ENCODE measurements at regions of chr4 and their contacts with region 1.

Region 1: DNA sequence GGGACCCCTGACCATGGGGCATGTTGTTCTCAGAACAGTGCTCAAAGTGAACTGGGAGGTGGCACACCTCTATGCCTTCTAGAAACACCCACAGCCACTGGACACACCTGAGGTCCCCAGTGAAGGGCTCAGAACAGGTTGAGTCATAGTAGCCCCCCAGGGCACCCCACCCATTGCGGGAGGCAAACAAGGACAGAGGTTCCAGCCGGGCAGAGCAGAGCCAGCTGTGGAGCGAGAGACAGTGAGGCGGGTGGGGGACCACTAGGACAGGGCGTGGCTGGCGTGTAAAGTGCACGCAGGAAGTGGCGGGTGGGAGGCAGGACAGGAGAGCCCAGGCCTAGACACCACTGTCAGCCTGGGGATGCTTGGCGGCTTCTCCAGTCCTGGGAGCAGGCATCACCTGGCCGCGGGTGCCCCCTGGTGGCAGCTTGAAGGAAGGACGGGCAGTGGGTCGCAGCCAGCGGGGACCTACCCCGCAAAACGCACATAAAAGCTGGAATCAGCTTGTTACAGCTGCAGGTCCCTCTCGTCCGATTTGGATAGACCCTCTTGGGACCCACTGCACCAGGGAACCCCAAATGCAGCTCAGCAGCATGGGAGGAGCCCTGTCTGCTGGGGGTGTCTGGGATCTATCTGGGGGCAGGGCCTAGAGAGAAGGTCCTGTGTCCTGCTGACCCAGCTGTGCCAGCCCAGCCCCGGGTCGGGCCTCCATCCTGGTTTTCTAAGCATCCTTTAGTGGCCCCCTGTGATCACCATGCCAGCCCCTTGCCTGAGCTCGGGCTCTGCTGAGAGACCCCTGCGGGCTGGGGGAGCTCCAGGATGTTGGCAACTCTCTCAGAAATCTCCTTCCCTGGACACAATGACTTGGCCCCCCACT is 57.6 kb downstream of the WFS1 start:
- DNase-seq: peak; percentile 78 to 92 (median 91)
- ATAC-seq: peak; percentile 70 to 73
- H3K4me3 ChIP-seq: no peak overlapping the region
- H3K27ac ChIP-seq: no peak overlapping the region
- H3K4me1 ChIP-seq: no peaks in the 10 kb centered on the region
- H3K27me3 ChIP-seq: no peaks in the 10 kb centered on the region

Region 2: DNA sequence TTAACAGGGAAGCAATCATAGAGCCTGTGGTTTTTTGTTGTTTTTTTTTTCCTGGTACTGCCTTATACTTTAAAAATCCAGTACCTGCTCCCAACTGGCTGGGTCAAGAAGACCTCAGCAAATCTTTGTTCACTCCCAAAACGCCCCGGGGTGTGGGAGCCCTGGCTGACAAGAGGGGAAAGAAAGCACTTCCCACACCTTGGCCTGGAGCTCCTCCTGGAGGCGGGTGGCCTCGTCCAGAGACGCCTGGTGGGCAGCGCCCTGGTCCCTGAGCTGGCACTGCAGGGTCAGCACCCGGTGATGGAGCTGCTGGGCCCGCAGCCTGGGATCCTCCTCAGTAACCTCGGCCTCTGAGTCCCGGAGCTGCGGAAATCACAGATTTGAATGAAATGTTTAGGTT is 347.3 kb before region 1 on chr4:
- intact Hi-C with region 1: no loop called
- DNase-seq: no peak
- ATAC-seq: peak in 1 of 2 donors; percentile 29
- H3K4me3 ChIP-seq: no peak overlapping the region
- H3K27ac ChIP-seq: no peak overlapping the region
- H3K4me1 ChIP-seq: no peaks in the 10 kb centered on the region
- H3K27me3 ChIP-seq: no peaks in the 10 kb centered on the region

Region 3: DNA sequence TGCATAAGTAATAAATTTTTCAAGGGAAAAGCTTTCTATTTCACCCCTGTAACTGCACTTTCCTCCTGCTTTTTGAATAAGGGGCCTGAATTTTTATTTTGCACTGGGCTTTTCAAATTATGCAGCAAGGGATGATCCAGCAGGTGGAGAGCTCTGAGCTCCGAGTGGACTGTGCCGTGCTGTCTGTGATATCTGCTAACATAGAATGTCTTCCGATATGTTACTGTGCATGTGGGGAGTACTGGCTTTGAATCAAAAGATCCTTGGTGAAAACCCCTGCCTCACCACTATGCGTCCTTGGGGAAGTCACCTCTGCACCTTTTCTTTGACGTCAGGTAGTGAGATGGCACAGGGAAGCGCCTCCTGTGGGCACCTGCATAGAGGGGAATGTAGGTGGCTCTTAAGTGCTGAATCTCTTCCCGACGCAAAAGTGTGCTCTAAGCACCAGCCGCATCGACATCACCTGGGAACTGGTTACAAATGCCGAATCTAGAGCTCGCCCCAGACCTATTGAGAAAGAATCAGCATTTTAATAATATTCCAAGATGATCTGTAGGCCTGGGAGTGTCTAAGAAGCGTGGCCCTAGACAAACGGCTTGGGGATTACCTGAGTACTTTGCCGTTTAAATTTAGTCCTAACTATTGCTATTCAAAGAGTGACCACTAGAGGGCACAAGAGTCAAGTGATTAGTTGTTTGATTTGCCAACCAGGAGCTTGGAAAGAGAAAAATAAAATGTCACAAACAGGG is 76.9 kb before region 1 on chr4:
- intact Hi-C with region 1: loop called (anchors 2 to 5 kb)
- DNase-seq: no peak
- ATAC-seq: peak in 1 of 2 donors; percentile 47
- H3K4me3 ChIP-seq: no peak overlapping the region
- H3K27ac ChIP-seq: no peak overlapping the region
- H3K4me1 ChIP-seq: no peaks in the 10 kb centered on the region
- H3K27me3 ChIP-seq: no peaks in the 10 kb centered on the region

Region 4: DNA sequence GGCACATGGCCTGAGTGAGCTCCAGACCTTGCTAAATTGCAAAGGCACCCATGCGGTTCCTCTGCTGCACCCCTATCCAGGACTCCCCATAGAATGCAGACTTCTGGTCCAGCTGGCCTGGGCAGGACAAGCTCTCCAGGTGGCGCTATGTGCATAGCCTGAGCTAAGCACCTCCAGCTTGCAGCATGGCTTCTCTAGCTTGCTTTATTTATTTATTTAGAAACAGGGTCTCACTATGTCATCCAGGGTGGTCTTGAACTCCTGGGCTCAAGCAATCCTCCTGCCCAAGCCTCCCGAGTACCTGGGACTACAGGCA is 63.1 kb before region 1 on chr4:
- intact Hi-C with region 1: loop called in 3 of 4 experiments (anchors 1 to 5 kb)
- DNase-seq: peak in 2 of 3 donors; percentile 77 to 81
- ATAC-seq: peak; percentile 70 to 72
- H3K4me3 ChIP-seq: no peak overlapping the region
- H3K27ac ChIP-seq: no peak overlapping the region
- H3K4me1 ChIP-seq: no peaks in the 10 kb centered on the region
- H3K27me3 ChIP-seq: no peaks in the 10 kb centered on the region

Region 5: DNA sequence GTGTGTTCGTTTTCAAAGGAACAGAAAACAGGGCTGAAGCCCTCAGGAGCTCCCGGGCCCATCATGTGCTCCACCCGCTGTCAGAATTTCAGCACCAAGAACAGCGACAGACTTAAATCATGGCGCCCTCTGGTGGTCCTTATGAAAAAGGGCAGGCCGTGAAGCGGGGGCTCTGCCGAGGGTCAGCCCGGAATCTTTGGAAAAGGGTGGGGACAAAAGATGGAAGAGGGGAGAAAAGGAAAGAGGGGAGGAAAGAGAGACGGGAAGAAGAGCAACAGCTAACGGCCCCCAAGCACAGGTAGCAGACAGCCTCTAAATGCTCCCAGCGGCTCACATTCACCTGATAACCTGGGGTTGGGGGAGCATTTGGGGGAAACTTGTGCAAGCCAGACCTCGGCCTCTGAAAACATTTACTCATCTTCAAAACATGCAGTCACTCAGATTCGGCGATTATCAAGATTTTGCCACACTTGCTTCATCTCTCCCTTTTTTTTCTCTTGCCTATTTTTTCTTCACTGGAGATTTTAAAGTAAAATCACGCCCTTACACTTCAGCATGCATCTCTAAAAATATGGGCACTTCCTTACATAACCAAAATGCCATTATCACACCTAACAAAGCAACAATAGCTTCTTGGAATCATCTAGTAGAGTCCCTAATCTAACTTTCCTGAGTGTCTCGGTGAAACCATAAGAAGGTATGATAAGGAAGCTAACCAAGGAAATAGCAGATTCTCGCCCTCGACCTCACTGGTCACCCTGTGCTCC is 219.6 kb after region 1 on chr4:
- intact Hi-C with region 1: loop called (anchors 5 to 10 kb)
- DNase-seq: no peak
- ATAC-seq: peak in 1 of 2 donors; percentile 65
- H3K4me3 ChIP-seq: no peak overlapping the region
- H3K27ac ChIP-seq: no peak overlapping the region
- H3K4me1 ChIP-seq: no peaks in the 10 kb centered on the region
- H3K27me3 ChIP-seq: no peaks in the 10 kb centered on the region